Dendritic cell treated with granulocyte-macrophage colony-stimulating factor and Interleukin-4, amounts not matched to agents 40 ng/mL and 50 ng/mL, for 4 days (primary cell): ENCODE measurements at regions of chr13 and their contacts with region 1.

Region 1: GRCh38 chr13:41652727-41653361 is 195.5 kb downstream of the RGCC start:
- H3K4me3 Mint-ChIP-seq: no peak overlapping the region
- H3K27ac Mint-ChIP-seq: no peak overlapping the region
- H3K4me1 Mint-ChIP-seq: peaks cover 23% of the 10 kb centered on the region
- H3K27me3 Mint-ChIP-seq: no peaks in the 10 kb centered on the region

Region 2: GRCh38 chr13:41352935-41353840 is 299.7 kb before region 1 on chr13:
- intact Hi-C with region 1: loop called (anchors 2 kb)
- H3K4me3 Mint-ChIP-seq: no peak overlapping the region
- H3K27ac Mint-ChIP-seq: no peak overlapping the region
- H3K4me1 Mint-ChIP-seq: peaks cover 19% of the 10 kb centered on the region
- H3K27me3 Mint-ChIP-seq: no peaks in the 10 kb centered on the region

Region 3: GRCh38 chr13:41384755-41385503 is 267.9 kb before region 1 on chr13:
- intact Hi-C with region 1: loop called (anchors 10 kb)
- H3K4me3 Mint-ChIP-seq: no peak overlapping the region
- H3K27ac Mint-ChIP-seq: peak overlapping the region; percentile 90
- H3K4me1 Mint-ChIP-seq: peaks cover 55% of the 10 kb centered on the region
- H3K27me3 Mint-ChIP-seq: no peaks in the 10 kb centered on the region

Region 4: GRCh38 chr13:41411522-41411921 is 241.3 kb before region 1 on chr13:
- intact Hi-C with region 1: loop called (anchors 2 kb)
- H3K4me3 Mint-ChIP-seq: no peak overlapping the region
- H3K27ac Mint-ChIP-seq: no peak overlapping the region
- H3K4me1 Mint-ChIP-seq: no peaks in the 10 kb centered on the region
- H3K27me3 Mint-ChIP-seq: no peaks in the 10 kb centered on the region